ENCODE measurements at regions of chr3 and their contacts with region 1.

Region 1: DNA sequence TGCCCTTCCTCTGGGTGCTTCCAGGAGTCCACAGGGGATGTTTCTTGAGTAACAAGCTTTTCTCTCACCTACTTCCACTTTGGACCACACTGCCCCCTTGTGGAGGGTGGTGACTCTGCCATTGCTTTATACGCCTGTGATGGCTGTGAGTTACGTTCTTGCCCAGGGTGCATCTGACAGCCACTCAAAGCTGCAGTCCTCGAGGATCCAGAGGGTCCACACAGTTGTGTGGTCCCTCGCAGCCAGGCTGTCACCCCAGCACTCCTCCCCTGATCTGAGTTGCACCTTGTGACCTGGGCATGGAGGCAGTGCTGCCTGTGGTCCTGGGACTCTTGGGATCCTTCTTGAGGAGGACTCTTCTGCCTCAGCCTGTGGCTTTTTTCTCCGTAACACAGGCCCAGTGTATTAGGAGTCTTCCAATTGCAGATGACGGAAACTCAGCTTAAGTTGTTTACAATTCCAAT is 23.4 kb downstream of the FOXL2 start:
- DNase-seq: peak; percentile 90
- ATAC-seq: peak; percentile 83
- H3K4me3 Mint-ChIP-seq: no peak overlapping the region
- H3K27ac Mint-ChIP-seq: no peak overlapping the region
- H3K4me1 Mint-ChIP-seq: no peaks in the 10 kb centered on the region
- H3K27me3 Mint-ChIP-seq: peaks cover 8% of the 10 kb centered on the region

Region 2: GRCh38 chr3:138417559-138417982 is 506.0 kb before region 1 on chr3:
- CTCF ChIA-PET with region 1: interaction called, 30 read pairs
- POLR2A ChIA-PET with region 1: no interaction called
- DNase-seq: peak; percentile 73
- ATAC-seq: peak; percentile 96
- H3K4me3 Mint-ChIP-seq: no peak overlapping the region
- H3K27ac Mint-ChIP-seq: no peak overlapping the region
- H3K4me1 Mint-ChIP-seq: peaks cover 2% of the 10 kb centered on the region
- H3K27me3 Mint-ChIP-seq: peaks cover 7% of the 10 kb centered on the region

Region 3: DNA sequence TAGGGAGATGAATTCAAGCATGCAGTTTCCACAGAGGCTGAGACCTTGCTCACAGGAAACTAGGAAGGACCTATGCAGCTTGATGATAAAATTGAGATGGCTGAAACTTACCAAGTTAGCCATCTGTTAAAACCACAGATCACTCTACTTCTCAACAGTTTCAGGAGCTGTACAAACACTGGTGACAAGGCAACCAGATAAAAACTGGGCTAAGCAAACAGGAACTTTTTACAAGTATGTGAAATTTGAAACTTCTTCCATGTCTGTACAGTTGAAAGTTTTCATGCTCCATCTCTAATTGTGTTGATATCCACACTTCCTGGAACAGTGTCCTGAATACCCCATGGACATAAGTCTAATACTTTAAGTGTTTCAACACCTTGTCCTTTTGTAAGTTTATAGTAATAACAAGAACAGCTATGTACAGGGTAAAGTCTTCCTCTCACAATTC is 236.8 kb before region 1 on chr3:
- CTCF ChIA-PET with region 1: interaction called, 26 read pairs
- POLR2A ChIA-PET with region 1: no interaction called
- DNase-seq: no peak
- ATAC-seq: no peak
- H3K4me3 Mint-ChIP-seq: no peak overlapping the region
- H3K27ac Mint-ChIP-seq: no peak overlapping the region
- H3K4me1 Mint-ChIP-seq: peaks cover 8% of the 10 kb centered on the region
- H3K27me3 Mint-ChIP-seq: no peaks in the 10 kb centered on the region

Region 4: DNA sequence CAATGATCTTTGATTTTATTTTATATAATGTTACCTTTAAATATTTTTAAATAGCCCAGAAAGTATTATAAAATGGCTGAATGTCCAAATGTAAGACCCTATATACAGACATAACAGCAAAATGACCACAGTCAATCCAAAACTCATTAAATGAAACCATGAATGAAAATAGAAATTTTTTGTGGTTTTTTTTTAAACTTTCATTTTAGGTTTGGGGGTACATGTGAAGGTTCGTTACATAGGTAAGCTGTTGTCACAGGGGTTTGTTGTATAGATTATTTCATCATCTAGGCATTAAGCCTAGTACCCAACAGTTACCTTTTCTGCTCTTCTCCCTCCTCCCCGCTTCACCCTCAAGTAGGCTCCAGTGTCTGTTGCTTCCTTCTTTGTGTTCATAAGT is 206.2 kb before region 1 on chr3:
- CTCF ChIA-PET with region 1: interaction called, 16 read pairs
- POLR2A ChIA-PET with region 1: no interaction called
- DNase-seq: no peak
- ATAC-seq: no peak
- H3K4me3 Mint-ChIP-seq: no peak overlapping the region
- H3K27ac Mint-ChIP-seq: no peak overlapping the region
- H3K4me1 Mint-ChIP-seq: peaks cover 13% of the 10 kb centered on the region
- H3K27me3 Mint-ChIP-seq: no peaks in the 10 kb centered on the region

Region 5: GRCh38 chr3:139006051-139006716 is 82.6 kb after region 1 on chr3 and contains the start of gene PRR23A:
- CTCF ChIA-PET with region 1: no interaction called
- POLR2A ChIA-PET with region 1: no interaction called
- DNase-seq: no peak
- ATAC-seq: no peak
- H3K4me3 Mint-ChIP-seq: no peak within 1 kb of the TSS
- H3K27ac Mint-ChIP-seq: no peak within 1 kb of the TSS
- H3K4me1 Mint-ChIP-seq: no peaks in the 10 kb centered on the region
- H3K27me3 Mint-ChIP-seq: peaks cover 2% of the 10 kb centered on the region
- total RNA-seq, gene PRR23A: not detected

Region 6: DNA sequence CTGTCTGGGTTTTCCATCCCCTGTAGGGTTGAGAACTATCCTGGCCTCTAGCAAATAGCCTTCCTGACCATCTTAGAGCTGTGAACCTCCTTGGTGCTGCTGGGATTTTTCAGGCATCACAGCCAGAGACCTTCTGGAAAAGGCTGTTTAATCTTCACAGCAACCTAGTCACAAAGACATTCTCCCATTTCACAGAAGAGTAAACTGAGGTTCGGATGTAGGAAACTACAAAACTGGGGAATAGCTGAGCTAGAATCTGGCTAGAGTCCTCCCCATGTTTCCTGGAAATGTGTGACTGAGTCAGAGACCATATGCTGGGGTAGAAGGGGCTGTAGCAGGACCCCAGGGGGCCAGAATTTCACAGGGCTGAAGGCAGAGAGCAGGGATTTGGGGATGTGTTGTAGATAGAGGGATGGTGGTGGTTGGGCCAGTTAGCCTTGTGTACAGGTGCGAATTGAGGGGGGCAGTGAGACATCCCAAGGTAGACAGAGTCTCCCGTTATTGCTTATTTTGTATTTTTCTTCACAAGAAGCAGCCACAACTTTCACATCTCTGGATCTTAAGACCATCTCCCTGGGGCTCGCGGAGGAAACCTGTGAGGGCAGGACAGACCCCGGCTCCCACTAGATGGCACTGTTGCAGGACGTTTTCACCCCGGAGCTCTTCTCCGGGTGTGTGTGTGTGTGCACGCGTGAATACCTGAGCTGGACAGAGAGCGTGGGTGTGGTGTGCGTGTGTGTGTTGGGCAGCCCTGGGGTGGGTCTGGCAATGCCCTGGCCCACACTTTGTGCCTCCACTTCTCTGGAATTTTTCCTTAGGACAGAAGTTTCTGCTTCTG is 188.0 kb after region 1 on chr3:
- CTCF ChIA-PET with region 1: interaction called, 11 read pairs
- POLR2A ChIA-PET with region 1: no interaction called
- DNase-seq: peak; percentile 75
- ATAC-seq: peak; percentile 66
- H3K4me3 Mint-ChIP-seq: no peak overlapping the region
- H3K27ac Mint-ChIP-seq: no peak overlapping the region
- H3K4me1 Mint-ChIP-seq: peaks cover 15% of the 10 kb centered on the region
- H3K27me3 Mint-ChIP-seq: peaks cover 13% of the 10 kb centered on the region

Measured in activated CD8-positive, alpha-beta T cell treated with anti-CD3 and anti-CD28 coated beads, Interleukin-2, amount 10 ng/mL, durations not matched to agents 7 days and 5 days (primary cell).